Activated CD4-positive, alpha-beta T cell treated with anti-CD3 and anti-CD28 coated beads for 36 hours (primary cell): ENCODE measurements at regions of chr10 and their contacts with region 1.

Region 1: GRCh38 chr10:119859420-119860258 is 13.0 kb downstream of the MCMBP start:
- DNase-seq: no peak
- ATAC-seq: no peak
- H3K4me3 Mint-ChIP-seq: no peak overlapping the region
- H3K27ac Mint-ChIP-seq: no peak overlapping the region
- H3K4me1 Mint-ChIP-seq: peaks cover 46% of the 10 kb centered on the region
- H3K27me3 Mint-ChIP-seq: no peaks in the 10 kb centered on the region

Region 2: DNA sequence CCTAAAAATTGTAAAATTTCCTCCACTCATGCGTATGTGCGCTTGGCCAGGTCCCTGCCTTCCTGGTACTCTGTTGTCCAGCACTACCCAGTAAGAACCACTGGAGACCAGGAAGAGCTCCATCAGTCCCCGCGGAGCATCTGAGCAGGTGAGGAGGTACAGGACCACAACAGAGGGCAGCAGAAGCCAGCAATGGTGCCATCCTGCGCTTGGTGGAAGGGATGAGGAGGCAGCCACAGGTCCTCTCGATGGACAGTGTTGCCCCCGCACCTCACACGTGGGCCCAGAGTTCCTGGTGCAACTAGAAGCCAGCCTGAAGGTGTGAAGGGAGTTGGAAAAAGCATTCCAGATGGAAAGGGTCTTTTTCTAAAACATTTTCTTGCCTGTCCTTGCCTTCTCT is 178.5 kb before region 1 on chr10:
- CTCF ChIA-PET with region 1: interaction called, 37 read pairs
- POLR2A ChIA-PET with region 1: no interaction called
- intact Hi-C with region 1: loop called (anchors 1 kb)
- DNase-seq: no peak
- ATAC-seq: no peak
- H3K4me3 Mint-ChIP-seq: no peak overlapping the region
- H3K27ac Mint-ChIP-seq: no peak overlapping the region
- H3K4me1 Mint-ChIP-seq: peaks cover 30% of the 10 kb centered on the region
- H3K27me3 Mint-ChIP-seq: no peaks in the 10 kb centered on the region

Region 3: DNA sequence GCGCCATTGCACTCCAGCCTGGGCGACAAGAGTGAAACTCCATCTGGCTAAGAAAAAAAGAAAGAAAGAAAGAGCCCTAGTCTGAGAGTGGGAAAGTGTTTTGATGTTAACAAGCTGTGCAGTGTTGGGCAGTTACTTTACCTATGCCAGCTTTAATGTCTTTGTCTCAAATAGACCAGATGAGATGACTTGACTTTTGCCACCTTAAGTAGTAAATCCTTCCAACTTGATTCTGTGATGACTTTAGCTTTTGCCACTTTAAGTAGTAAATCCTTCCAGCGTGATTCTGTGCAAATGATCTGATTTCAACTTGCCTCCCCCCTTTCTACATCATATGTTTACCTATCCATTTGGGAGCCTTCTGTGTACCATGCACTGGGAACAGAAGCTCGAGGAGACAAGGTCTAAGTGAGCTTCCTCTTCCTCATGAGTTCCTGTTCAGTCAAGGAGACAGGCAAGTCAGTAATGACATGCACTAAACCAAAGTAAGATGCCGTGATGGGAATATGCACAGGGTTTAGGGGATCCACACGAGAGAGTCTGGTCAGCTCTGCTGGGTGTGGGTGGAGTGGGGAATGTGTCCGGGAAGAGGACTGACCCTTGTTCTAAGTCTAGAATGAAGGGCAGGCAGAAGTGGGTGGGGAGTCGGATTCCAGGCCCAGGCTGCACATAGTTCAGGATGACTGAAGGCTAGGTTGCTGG is 116.5 kb before region 1 on chr10:
- CTCF ChIA-PET with region 1: interaction called, 33 read pairs
- POLR2A ChIA-PET with region 1: no interaction called
- intact Hi-C with region 1: no loop called
- DNase-seq: no peak
- ATAC-seq: no peak
- H3K4me3 Mint-ChIP-seq: no peak overlapping the region
- H3K27ac Mint-ChIP-seq: no peak overlapping the region
- H3K4me1 Mint-ChIP-seq: peaks cover 27% of the 10 kb centered on the region
- H3K27me3 Mint-ChIP-seq: no peaks in the 10 kb centered on the region

Region 4: GRCh38 chr10:119769886-119770285 is 89.8 kb before region 1 on chr10:
- CTCF ChIA-PET with region 1: no interaction called
- POLR2A ChIA-PET with region 1: no interaction called
- intact Hi-C with region 1: no loop called
- DNase-seq: no peak
- ATAC-seq: no peak
- H3K4me3 Mint-ChIP-seq: no peak overlapping the region
- H3K27ac Mint-ChIP-seq: no peak overlapping the region
- H3K4me1 Mint-ChIP-seq: peaks cover 14% of the 10 kb centered on the region
- H3K27me3 Mint-ChIP-seq: no peaks in the 10 kb centered on the region

Region 5: DNA sequence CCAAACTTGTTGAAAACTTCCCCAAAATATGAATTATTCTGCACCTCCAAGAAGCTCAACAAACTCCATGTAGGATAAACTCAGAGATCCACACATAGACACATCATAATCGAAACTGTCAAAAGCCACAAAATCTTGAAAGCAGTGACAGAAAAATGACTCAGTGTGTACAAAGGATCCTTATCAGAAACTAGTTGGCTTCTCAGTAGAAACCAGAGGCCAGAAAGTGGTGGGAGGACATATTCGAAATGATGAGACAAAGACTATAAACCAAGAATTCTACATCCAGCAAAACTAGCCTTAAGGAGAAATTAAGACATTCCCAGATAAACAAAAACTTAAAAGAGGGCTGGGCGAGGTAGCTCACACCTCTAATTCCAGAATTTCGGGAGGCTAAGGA is 25.5 kb before region 1 on chr10:
- CTCF ChIA-PET with region 1: interaction called, 17 read pairs
- POLR2A ChIA-PET with region 1: interaction called, 3 read pairs
- intact Hi-C with region 1: no loop called
- DNase-seq: peak; percentile 35
- ATAC-seq: peak; percentile 80
- H3K4me3 Mint-ChIP-seq: no peak overlapping the region
- H3K27ac Mint-ChIP-seq: peak overlapping the region; percentile 83
- H3K4me1 Mint-ChIP-seq: peaks cover 38% of the 10 kb centered on the region
- H3K27me3 Mint-ChIP-seq: no peaks in the 10 kb centered on the region

Region 6: DNA sequence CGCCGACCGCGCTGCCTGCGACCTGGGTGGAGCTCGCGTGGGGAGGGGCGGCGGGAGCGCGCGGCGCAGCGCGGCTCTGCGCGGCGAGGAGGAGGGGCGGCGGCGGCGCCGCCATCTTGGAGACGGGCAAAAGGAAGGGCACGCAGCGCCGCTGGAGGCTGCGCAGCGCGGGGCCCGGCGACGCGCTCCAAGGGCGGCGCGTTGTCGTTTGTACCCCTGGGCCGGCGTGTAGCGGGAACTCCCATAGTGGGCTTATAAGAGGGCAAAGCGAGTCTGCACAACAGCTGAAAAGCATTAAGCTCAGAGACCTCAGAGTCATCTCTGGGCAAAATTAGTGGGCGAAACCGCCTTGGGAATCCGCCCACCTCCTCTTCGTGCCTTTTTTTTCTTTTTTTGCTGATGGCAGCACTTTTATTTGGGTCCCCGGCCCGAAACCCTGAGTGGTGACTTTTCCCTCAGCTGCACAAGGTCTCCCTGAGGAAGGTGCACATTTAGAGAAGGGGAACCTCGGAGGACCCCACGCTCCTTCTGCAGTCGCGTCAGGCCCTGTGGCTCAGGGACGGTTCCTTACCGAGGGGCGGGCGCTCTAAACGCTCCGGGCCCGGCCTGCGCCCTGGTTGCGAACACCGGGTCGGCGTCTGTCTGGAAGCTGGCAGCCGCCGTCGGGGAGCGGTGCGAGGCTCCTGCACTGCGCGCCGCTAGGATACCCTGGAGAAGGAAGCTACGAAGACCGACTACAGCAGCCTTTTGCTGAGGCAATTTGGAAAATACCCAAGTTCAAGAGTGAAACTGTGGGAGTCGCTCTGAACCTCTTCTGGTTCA is 13.4 kb after region 1 on chr10:
- CTCF ChIA-PET with region 1: interaction called, 24 read pairs
- POLR2A ChIA-PET with region 1: interaction called, 4 read pairs
- intact Hi-C with region 1: no loop called
- DNase-seq: peak; percentile 94
- ATAC-seq: peak; percentile 95
- H3K4me3 Mint-ChIP-seq: peak overlapping the region; percentile 79
- H3K27ac Mint-ChIP-seq: peak overlapping the region; percentile 87
- H3K4me1 Mint-ChIP-seq: peaks cover 33% of the 10 kb centered on the region
- H3K27me3 Mint-ChIP-seq: no peaks in the 10 kb centered on the region

Region 7: GRCh38 chr10:120156614-120157274 is 297.1 kb after region 1 on chr10:
- CTCF ChIA-PET with region 1: no interaction called
- POLR2A ChIA-PET with region 1: no interaction called
- intact Hi-C with region 1: no loop called
- DNase-seq: no peak
- ATAC-seq: no peak
- H3K4me3 Mint-ChIP-seq: no peak overlapping the region
- H3K27ac Mint-ChIP-seq: no peak overlapping the region
- H3K4me1 Mint-ChIP-seq: no peaks in the 10 kb centered on the region
- H3K27me3 Mint-ChIP-seq: peaks cover 6% of the 10 kb centered on the region